Activated CD4-positive, alpha-beta memory T cell treated with anti-CD3 and anti-CD28 coated beads, Interleukin-2, amount 10 ng/mL, durations not matched to agents 7 days and 5 days (primary cell): ENCODE measurements at regions of chr14 and their contacts with region 1.

Region 1: GRCh38 chr14:99266181-99267178 is 5.5 kb downstream of the BCL11B start:
- DNase-seq: peak; percentile 92
- H3K4me3 Mint-ChIP-seq: peak overlapping the region; percentile 99
- H3K27ac Mint-ChIP-seq: peak overlapping the region; percentile 100
- H3K4me1 Mint-ChIP-seq: peaks cover 59% of the 10 kb centered on the region
- H3K27me3 Mint-ChIP-seq: no peaks in the 10 kb centered on the region

Region 2: DNA sequence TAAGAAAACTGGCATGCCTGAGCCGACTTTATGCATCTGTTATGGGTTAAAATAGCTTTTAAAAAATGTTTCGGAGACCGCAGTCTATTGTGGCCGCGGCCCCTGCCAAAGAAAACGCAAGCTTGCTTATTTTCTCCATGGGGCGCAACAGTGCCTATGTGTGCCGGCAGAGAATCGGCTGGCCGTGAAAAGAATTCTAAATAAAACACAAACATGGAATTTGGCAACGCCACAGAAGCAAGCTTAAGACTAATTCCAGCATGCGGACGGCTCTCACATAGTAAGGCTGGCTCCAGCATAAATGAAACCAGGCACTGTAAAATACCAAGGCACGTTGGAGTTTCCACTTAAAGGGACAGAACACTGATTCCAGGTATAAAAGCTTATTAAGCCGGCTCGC is 51.2 kb before region 1 on chr14:
- CTCF ChIA-PET with region 1: interaction called, 8 read pairs
- POLR2A ChIA-PET with region 1: interaction called, 1,689 read pairs
- DNase-seq: no peak
- H3K4me3 Mint-ChIP-seq: peak overlapping the region; percentile 62
- H3K27ac Mint-ChIP-seq: peak overlapping the region; percentile 63
- H3K4me1 Mint-ChIP-seq: peaks cover 93% of the 10 kb centered on the region
- H3K27me3 Mint-ChIP-seq: no peaks in the 10 kb centered on the region

Region 3: DNA sequence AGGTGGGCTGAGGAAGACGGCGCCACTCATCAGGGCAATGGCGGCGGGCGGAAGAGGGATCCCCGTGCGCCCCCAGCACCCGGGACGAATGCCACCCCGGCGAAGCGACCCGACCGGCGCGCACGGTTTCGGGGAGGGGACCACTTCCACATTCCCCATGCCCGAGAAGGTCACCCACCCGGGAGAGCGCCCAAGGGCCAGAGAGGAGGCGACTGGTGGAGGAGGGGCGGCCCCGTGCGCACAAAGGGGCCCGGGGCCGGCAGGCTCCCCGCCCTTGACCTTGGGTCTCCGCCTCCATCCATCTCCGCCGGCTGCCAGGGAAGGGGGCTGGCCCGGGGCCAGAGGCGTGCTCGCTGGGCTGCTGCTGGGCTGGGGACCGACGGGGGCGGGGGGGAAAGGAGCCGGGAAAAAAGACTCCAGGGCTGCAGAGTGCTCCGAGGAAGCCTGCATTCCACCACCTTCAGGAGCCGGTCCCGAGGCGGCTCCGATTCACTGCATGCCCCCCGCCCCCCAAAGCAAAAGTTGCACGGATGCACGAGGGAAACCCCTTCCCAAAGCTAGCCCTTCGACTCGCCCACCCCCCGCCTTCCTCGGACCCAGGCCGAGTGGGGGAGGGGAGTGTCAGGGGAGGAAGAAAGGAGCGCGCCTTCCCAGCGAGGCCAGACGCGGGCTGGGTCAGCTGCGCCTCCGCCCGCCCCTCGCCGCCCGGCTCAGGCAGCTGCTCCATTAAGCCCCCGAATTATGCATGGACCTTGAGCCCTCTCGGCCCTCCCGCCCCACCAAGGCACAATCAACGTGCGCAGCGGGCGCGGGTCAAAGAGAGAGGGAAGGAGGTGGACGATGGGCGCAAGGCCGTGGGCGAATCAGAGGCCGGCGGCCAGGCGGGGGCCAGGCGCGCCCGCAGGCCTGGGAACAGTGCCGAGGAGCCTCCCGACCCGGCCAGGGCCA is 20.6 kb before region 1 on chr14:
- CTCF ChIA-PET with region 1: interaction called, 30 read pairs
- POLR2A ChIA-PET with region 1: interaction called, 1,689 read pairs
- DNase-seq: no peak
- H3K4me3 Mint-ChIP-seq: peak overlapping the region; percentile 79
- H3K27ac Mint-ChIP-seq: peak overlapping the region; percentile 99
- H3K4me1 Mint-ChIP-seq: peaks cover 79% of the 10 kb centered on the region
- H3K27me3 Mint-ChIP-seq: no peaks in the 10 kb centered on the region